ENCODE measurements at regions of chr5 and their contacts with region 1.

Region 1: GRCh38 chr5:111278845-111279504 is 54.8 kb downstream of the CAMK4 start:
- DNase-seq: peak; percentile 69 to 94
- H3K4me3 ChIP-seq: no peak overlapping the region
- H3K27ac ChIP-seq: no peak overlapping the region
- H3K4me1 ChIP-seq: no peaks in the 10 kb centered on the region
- H3K27me3 ChIP-seq: no peaks in the 10 kb centered on the region
- CTCF ChIP-seq: peak; percentile 84 to 93 (median 85)
- EP300 ChIP-seq: no peak; a peak in 1 of 3 replicates
- POLR2A ChIP-seq: no peak
- RAD21 ChIP-seq: peak; percentile 95

Region 2: GRCh38 chr5:111158105-111158744 is 120.8 kb before region 1 on chr5:
- CTCF ChIA-PET with region 1: interaction called, 163 read pairs
- POLR2A ChIA-PET with region 1: interaction called, 3 read pairs
- DNase-seq: peak; percentile 43 to 90
- H3K4me3 ChIP-seq: no peak overlapping the region
- H3K27ac ChIP-seq: no peak overlapping the region
- H3K4me1 ChIP-seq: no peaks in the 10 kb centered on the region
- H3K27me3 ChIP-seq: no peaks in the 10 kb centered on the region
- CTCF ChIP-seq: peak; percentile 53 to 98 (median 90)
- EP300 ChIP-seq: no peak
- POLR2A ChIP-seq: no peak
- RAD21 ChIP-seq: peak; percentile 96 to 99

Region 3: GRCh38 chr5:111172504-111172903 is 106.5 kb before region 1 on chr5:
- CTCF ChIA-PET with region 1: interaction called, 22 read pairs
- POLR2A ChIA-PET with region 1: no interaction called
- DNase-seq: no peak
- H3K4me3 ChIP-seq: no peak overlapping the region
- H3K27ac ChIP-seq: no peak overlapping the region
- H3K4me1 ChIP-seq: no peaks in the 10 kb centered on the region; a peak in 1 of 7 replicates
- H3K27me3 ChIP-seq: peaks cover 0 to 1% (median 0%) of the 10 kb centered on the region in 4 experiments; a peak in 1 of 7 replicates
- CTCF ChIP-seq: no peak
- EP300 ChIP-seq: no peak
- POLR2A ChIP-seq: no peak
- RAD21 ChIP-seq: no peak

Region 4: GRCh38 chr5:111254613-111255012 is 24.4 kb before region 1 on chr5:
- CTCF ChIA-PET with region 1: interaction called, 15 read pairs
- POLR2A ChIA-PET with region 1: no interaction called
- DNase-seq: no peak
- H3K4me3 ChIP-seq: no peak overlapping the region
- H3K27ac ChIP-seq: no peak overlapping the region
- H3K4me1 ChIP-seq: no peaks in the 10 kb centered on the region
- H3K27me3 ChIP-seq: no peaks in the 10 kb centered on the region
- CTCF ChIP-seq: no peak
- EP300 ChIP-seq: no peak
- POLR2A ChIP-seq: no peak
- RAD21 ChIP-seq: no peak

Region 5: DNA sequence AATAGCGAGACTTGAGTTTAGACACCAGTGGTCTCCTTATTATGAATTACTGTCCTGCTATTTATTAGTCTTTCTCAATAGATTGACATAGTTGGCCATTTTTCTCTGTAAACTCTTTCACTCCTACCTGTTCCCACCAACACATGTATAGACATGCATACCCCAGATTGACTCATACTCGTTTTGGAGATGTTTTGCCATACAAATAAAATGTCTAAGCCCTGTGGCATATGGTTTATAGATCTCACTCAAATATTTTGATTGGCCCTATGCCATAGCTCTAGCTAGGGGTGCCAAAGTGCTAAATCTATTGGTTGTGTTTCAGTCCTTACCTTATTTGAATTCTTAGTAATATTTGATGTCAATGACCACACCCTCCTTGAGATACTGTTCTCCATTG is 12.5 kb before region 1 on chr5:
- CTCF ChIA-PET with region 1: interaction called, 37 read pairs
- POLR2A ChIA-PET with region 1: no interaction called
- DNase-seq: no peak
- H3K4me3 ChIP-seq: no peak overlapping the region
- H3K27ac ChIP-seq: no peak overlapping the region
- H3K4me1 ChIP-seq: peaks cover 0 to 2% (median 0%) of the 10 kb centered on the region in 4 experiments; a peak in 1 of 7 replicates
- H3K27me3 ChIP-seq: peaks cover 0 to 3% (median 0%) of the 10 kb centered on the region in 4 experiments; a peak in 4 of 7 replicates
- CTCF ChIP-seq: no peak
- EP300 ChIP-seq: no peak
- POLR2A ChIP-seq: no peak
- RAD21 ChIP-seq: no peak

Region 6: DNA sequence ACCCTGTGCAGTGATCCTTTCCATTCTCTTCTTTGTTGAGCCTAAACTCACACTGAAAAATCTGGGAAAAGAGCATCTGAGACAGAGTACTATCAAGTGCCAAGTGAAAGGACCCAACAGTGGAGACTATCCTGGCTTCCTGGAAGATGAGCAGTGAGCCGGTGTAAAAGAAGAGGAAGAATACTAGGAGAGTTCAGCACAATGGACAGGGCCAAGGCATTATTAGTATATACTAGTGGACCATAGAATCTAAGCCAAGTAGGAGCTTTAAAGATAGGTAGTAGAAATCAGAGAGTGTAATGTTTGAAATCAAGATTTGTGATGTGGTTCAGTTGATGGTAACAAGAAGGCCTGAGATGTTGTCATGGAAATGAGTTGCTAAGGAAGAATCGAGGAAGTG is 86.0 kb after region 1 on chr5:
- CTCF ChIA-PET with region 1: no interaction called
- POLR2A ChIA-PET with region 1: no interaction called
- DNase-seq: no peak
- H3K4me3 ChIP-seq: no peak overlapping the region
- H3K27ac ChIP-seq: no peak overlapping the region
- H3K4me1 ChIP-seq: no peaks in the 10 kb centered on the region
- H3K27me3 ChIP-seq: no peaks in the 10 kb centered on the region
- CTCF ChIP-seq: no peak
- EP300 ChIP-seq: no peak
- POLR2A ChIP-seq: no peak
- RAD21 ChIP-seq: no peak

Region 7: DNA sequence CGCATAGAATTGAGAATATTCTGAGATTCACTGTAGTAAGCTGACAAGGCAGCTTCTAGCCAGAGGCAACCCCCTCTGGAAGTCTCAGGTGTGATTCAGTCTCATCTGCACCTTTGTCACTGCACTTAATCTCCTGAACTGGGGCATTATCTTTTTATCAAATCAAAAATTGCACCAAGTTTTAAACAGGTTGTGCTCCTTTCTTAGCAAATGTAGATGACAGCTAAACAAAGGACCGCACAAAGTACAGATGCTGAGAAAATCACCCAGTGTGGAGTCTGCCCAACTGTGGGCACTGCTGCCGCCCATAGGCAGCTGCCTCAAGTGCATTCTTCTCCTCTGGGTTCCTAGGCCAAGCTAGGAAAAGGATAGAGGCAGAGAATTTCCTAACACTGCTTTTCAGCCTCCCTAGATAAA is 182.3 kb after region 1 on chr5:
- CTCF ChIA-PET with region 1: interaction called, 12 read pairs
- POLR2A ChIA-PET with region 1: no interaction called
- DNase-seq: peak; percentile 36 to 55
- H3K4me3 ChIP-seq: no peak overlapping the region
- H3K27ac ChIP-seq: no peak overlapping the region
- H3K4me1 ChIP-seq: peaks cover 0 to 3% (median 3%) of the 10 kb centered on the region in 4 experiments; a peak in 3 of 7 replicates
- H3K27me3 ChIP-seq: no peaks in the 10 kb centered on the region
- CTCF ChIP-seq: peak; percentile 79 to 90 (median 85)
- EP300 ChIP-seq: no peak
- POLR2A ChIP-seq: no peak
- RAD21 ChIP-seq: peak; percentile 82 to 84

Measured in H1 (cell line).